Upper lobe of right lung (tissue), 1 donor: ENCODE measurements at regions of chr4 and their contacts with region 1.

Region 1: DNA sequence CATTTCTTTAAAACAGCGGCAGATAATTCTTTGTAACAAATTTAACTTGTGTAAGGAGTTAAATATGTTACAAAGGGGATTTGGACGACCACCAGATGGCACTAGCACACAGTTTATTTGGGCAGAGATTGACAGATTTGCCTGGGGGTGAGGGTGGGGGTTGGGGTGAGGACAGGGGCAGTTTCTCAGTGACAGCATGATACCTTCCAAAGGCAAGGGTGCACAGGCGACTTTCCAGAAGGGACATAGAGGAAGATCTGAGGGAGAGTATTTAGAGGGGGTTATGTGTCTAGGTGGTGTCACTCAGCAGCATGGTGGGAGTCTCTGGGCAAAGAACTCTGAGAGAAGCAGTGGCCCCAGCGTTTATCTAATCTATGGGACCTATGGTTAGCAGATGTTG is 9.6 kb upstream of the TMA16 start:
- DNase-seq: no peak
- ATAC-seq: peak; percentile 75
- H3K4me3 ChIP-seq: no peak overlapping the region
- H3K27ac ChIP-seq: no peak overlapping the region
- H3K4me1 ChIP-seq: no peaks in the 10 kb centered on the region
- H3K27me3 ChIP-seq: no peaks in the 10 kb centered on the region
- CTCF ChIP-seq: peak; percentile 55

Region 2: GRCh38 chr4:163544407-163545038 is 59.6 kb after region 1 on chr4:
- intact Hi-C with region 1: loop called (anchors 5 kb)
- DNase-seq: peak; percentile 74
- ATAC-seq: peak; percentile 94
- H3K4me3 ChIP-seq: peak overlapping the region; percentile 19
- H3K27ac ChIP-seq: no peak overlapping the region
- H3K4me1 ChIP-seq: no peaks in the 10 kb centered on the region
- H3K27me3 ChIP-seq: no peaks in the 10 kb centered on the region
- CTCF ChIP-seq: peak; percentile 95